Activated naive CD4-positive, alpha-beta T cell treated with anti-CD3 and anti-CD28 coated beads for 36 hours (primary cell): ENCODE measurements at regions of chr2 and their contacts with region 1.

Region 1: GRCh38 chr2:161136696-161137324 is 23.4 kb upstream of the TANK start:
- DNase-seq: peak; percentile 48
- H3K4me3 Mint-ChIP-seq: peak overlapping the region; percentile 88
- H3K27ac Mint-ChIP-seq: peak overlapping the region; percentile 98
- H3K4me1 Mint-ChIP-seq: peaks cover 49% of the 10 kb centered on the region
- H3K27me3 Mint-ChIP-seq: no peaks in the 10 kb centered on the region

Region 2: GRCh38 chr2:160482673-160483072 is 654.1 kb before region 1 on chr2:
- CTCF ChIA-PET with region 1: no interaction called
- intact Hi-C with region 1: loop called (anchors 10 kb)
- DNase-seq: peak; percentile 46
- H3K4me3 Mint-ChIP-seq: peak overlapping the region; percentile 47
- H3K27ac Mint-ChIP-seq: peak overlapping the region; percentile 85
- H3K4me1 Mint-ChIP-seq: peaks cover 71% of the 10 kb centered on the region
- H3K27me3 Mint-ChIP-seq: no peaks in the 10 kb centered on the region

Region 3: GRCh38 chr2:160639472-160639871 is 497.3 kb before region 1 on chr2:
- CTCF ChIA-PET with region 1: no interaction called
- intact Hi-C with region 1: no loop called
- DNase-seq: no peak
- H3K4me3 Mint-ChIP-seq: no peak overlapping the region
- H3K27ac Mint-ChIP-seq: no peak overlapping the region
- H3K4me1 Mint-ChIP-seq: no peaks in the 10 kb centered on the region
- H3K27me3 Mint-ChIP-seq: no peaks in the 10 kb centered on the region

Region 4: DNA sequence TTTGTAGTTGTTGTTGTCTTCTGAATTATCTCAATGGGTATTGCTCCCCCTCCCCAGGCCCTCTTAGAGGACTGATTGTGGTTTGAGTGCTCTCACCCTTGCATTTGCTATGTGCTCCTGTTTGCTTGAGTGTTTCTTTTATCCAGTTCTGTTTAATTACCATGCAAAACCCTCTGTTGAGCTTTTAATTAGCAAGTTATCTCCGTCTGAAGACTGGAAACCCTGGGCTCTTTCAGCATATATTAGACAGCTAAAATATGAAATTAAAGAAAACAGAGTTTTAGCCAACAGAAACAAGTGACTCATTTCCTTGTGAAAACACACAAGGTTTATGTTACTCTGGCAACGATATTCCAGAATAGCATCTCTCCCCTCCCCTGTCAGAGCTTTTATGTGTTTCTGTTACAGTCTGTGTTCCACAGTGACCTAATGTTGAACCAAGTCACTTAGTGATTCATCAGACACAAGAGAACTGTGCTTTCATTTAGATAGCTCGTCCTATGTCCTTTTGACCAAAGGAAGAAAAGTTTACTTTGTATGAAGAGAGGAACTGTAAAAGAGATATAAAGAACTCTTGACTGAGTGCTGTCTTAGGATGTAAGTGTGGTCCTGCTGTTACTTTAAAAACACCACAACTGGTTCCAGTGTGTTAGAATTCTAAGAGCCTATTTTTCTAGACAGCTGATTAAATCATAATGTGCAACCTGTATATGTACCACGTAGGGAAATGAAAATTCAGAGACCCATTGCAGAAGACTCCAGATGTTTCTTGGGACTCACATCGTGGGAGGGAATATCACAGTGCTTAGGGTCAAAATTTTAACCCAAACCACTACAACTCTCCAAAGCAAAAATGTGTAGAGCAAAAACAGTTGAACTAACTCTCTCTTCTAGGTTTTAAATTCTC is 470.4 kb before region 1 on chr2:
- CTCF ChIA-PET with region 1: no interaction called
- intact Hi-C with region 1: no loop called
- DNase-seq: no peak
- H3K4me3 Mint-ChIP-seq: no peak overlapping the region
- H3K27ac Mint-ChIP-seq: no peak overlapping the region
- H3K4me1 Mint-ChIP-seq: peaks cover 19% of the 10 kb centered on the region
- H3K27me3 Mint-ChIP-seq: no peaks in the 10 kb centered on the region

Region 5: DNA sequence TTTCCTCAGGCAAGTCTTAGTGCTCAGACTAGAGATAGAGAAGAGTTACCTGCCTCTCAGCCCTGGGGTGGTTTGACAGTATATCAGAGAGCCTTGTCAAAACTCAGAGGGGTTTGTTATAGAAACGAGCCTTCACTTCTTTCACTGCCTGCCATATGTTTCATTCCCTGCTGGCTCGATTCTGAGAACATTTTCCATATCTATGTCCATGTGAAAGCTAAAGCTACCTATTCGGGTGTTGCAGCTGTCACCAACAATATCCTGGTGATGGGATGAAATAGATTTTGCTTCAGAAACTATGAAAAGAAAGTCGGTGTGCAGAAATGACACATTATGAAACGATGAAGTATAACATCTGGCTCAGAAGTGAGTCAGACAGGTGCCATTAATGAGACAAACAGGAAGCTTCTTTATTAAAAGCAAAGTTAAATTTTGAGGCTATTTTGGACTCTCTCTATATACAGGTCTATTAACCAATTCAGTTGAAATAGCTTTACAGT is 32.7 kb before region 1 on chr2:
- CTCF ChIA-PET with region 1: interaction called, 3 read pairs
- intact Hi-C with region 1: loop called (anchors 1 kb)
- DNase-seq: peak; percentile 35
- H3K4me3 Mint-ChIP-seq: no peak overlapping the region
- H3K27ac Mint-ChIP-seq: peak overlapping the region; percentile 54
- H3K4me1 Mint-ChIP-seq: peaks cover 34% of the 10 kb centered on the region
- H3K27me3 Mint-ChIP-seq: peaks cover 3% of the 10 kb centered on the region

Region 6: GRCh38 chr2:161160226-161161069 is 23.6 kb after region 1 on chr2 and contains the start of gene TANK:
- CTCF ChIA-PET with region 1: interaction called, 3 read pairs
- intact Hi-C with region 1: loop called (anchors 1 kb)
- DNase-seq: peak; percentile 94
- H3K4me3 Mint-ChIP-seq: peak within 1 kb of the TSS; percentile 96
- H3K27ac Mint-ChIP-seq: peak within 1 kb of the TSS; percentile 99
- H3K4me1 Mint-ChIP-seq: peaks cover 48% of the 10 kb centered on the region
- H3K27me3 Mint-ChIP-seq: no peaks in the 10 kb centered on the region
- total RNA-seq, gene TANK: 48.6 to 50.4 TPM

Region 7: GRCh38 chr2:161308178-161308955 is 171.6 kb after region 1 on chr2 and contains the start of gene PSMD14:
- CTCF ChIA-PET with region 1: no interaction called
- intact Hi-C with region 1: loop called (anchors 1 kb)
- DNase-seq: peak; percentile 96
- H3K4me3 Mint-ChIP-seq: peak within 1 kb of the TSS; percentile 86
- H3K27ac Mint-ChIP-seq: peak within 1 kb of the TSS; percentile 91
- H3K4me1 Mint-ChIP-seq: peaks cover 35% of the 10 kb centered on the region
- H3K27me3 Mint-ChIP-seq: no peaks in the 10 kb centered on the region
- total RNA-seq, gene PSMD14: 76.2 to 79.4 TPM

Region 8: DNA sequence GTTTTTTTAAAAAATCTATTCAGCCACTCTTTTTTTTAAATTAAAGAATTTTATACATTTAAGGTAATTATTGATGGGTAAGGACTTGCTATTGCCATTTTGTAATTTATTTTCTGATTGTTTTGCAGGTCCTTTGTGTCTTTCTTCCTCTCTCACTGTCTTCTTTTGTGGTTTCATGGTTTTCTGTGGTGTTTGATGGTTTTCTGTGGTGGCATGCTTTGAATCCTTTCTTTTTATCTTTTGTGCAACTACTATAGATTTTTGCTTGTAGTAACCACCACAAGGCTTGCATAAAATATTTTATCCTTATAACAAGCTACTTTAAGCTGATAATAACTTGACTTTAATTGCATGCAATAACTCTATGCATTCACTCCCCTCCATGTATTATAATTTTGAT is 455.9 kb after region 1 on chr2:
- CTCF ChIA-PET with region 1: no interaction called
- intact Hi-C with region 1: no loop called
- DNase-seq: no peak
- H3K4me3 Mint-ChIP-seq: no peak overlapping the region
- H3K27ac Mint-ChIP-seq: no peak overlapping the region
- H3K4me1 Mint-ChIP-seq: peaks cover 8% of the 10 kb centered on the region
- H3K27me3 Mint-ChIP-seq: peaks cover 21% of the 10 kb centered on the region